ENCODE measurements at regions of chr3 and their contacts with region 1.

Region 1: GRCh38 chr3:111859974-111860859 is 1.2 kb downstream of the PHLDB2 start:
- DNase-seq: peak; percentile 27
- H3K4me3 Mint-ChIP-seq: peak overlapping the region; percentile 85
- H3K27ac Mint-ChIP-seq: no peak overlapping the region
- H3K4me1 Mint-ChIP-seq: peaks cover 27% of the 10 kb centered on the region
- H3K27me3 Mint-ChIP-seq: peaks cover 61% of the 10 kb centered on the region

Region 2: DNA sequence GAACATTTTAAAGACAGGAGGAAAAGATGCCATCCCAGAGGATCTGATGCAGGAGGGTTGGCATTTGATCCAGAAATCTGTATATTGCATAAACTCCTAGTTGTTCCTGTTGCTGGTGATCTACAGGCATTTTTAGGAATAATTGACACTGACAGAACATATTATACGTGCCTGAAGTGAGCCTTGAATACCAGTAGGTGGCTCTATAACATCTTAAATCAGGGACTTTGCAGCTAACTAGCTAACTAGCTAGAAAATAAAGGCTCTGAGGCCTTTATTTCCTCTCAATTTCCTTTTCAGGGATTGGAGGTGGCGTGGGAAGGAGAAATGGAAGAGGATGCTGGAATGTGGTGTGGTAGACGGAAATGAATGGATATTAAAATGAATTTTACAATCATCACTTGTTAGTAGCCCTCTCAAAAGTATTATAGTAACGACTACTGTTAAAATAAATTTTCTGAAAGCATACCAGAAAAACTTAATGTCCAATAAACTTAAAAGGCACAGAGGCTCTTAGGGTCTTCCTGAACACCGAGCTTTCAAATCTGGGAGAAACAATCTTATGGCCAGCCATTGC is 191.2 kb before region 1 on chr3:
- intact Hi-C with region 1: no loop called
- DNase-seq: no peak
- H3K4me3 Mint-ChIP-seq: no peak overlapping the region
- H3K27ac Mint-ChIP-seq: peak overlapping the region; percentile 63
- H3K4me1 Mint-ChIP-seq: peaks cover 85% of the 10 kb centered on the region
- H3K27me3 Mint-ChIP-seq: no peaks in the 10 kb centered on the region

Region 3: DNA sequence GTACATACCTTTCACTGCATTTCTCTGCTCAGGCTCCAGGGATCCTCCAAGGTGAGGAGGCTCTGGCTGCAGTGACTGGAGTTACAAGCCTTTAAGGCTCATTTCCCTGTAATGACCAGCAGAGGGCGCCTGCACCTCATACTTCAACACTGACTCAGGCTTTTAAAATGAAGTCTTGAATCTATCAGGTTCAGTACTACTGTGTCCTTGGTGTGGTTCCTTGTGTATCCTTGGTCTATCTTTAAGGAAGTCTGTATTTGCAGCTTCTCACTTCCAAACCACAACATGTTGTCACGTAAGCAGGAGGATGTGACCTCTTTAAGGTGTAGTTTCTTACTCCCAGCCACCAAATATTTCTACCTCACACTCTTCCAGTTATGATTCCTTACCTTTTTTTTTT is 142.6 kb before region 1 on chr3:
- intact Hi-C with region 1: loop called (anchors 1 kb)
- DNase-seq: peak; percentile 44
- H3K4me3 Mint-ChIP-seq: no peak overlapping the region
- H3K27ac Mint-ChIP-seq: peak overlapping the region; percentile 70
- H3K4me1 Mint-ChIP-seq: peaks cover 8% of the 10 kb centered on the region
- H3K27me3 Mint-ChIP-seq: no peaks in the 10 kb centered on the region

Region 4: GRCh38 chr3:111737706-111738086 is 122.5 kb before region 1 on chr3:
- intact Hi-C with region 1: loop called (anchors 5 kb)
- DNase-seq: no peak
- H3K4me3 Mint-ChIP-seq: no peak overlapping the region
- H3K27ac Mint-ChIP-seq: no peak overlapping the region
- H3K4me1 Mint-ChIP-seq: peaks cover 27% of the 10 kb centered on the region
- H3K27me3 Mint-ChIP-seq: no peaks in the 10 kb centered on the region

Region 5: GRCh38 chr3:111895079-111895478 is 34.9 kb after region 1 on chr3:
- intact Hi-C with region 1: no loop called
- DNase-seq: no peak
- H3K4me3 Mint-ChIP-seq: no peak overlapping the region
- H3K27ac Mint-ChIP-seq: no peak overlapping the region
- H3K4me1 Mint-ChIP-seq: no peaks in the 10 kb centered on the region
- H3K27me3 Mint-ChIP-seq: no peaks in the 10 kb centered on the region

Region 6: GRCh38 chr3:112437146-112438022 is 577.2 kb after region 1 on chr3:
- intact Hi-C with region 1: no loop called
- DNase-seq: peak; percentile 30
- H3K4me3 Mint-ChIP-seq: no peak overlapping the region
- H3K27ac Mint-ChIP-seq: peak overlapping the region; percentile 75
- H3K4me1 Mint-ChIP-seq: peaks cover 67% of the 10 kb centered on the region
- H3K27me3 Mint-ChIP-seq: no peaks in the 10 kb centered on the region

Region 7: DNA sequence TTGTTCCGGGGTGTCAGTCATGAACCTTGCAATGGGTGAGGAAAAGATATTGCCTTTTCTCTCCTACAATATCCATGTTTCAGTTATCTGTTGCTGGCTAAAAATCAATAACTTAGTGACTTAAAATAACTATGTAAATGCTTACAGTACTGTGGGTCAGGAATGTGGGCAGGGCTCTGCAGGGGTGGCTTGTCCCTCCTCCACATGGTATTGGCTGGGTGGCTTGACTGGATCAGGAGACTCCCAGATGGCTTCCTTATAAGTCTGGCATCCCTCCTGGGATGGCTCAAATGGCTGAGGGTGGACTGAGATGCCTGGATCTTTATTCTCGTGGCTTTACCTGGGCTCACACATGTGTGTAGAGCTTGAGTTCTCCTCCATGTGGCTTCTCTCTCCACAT is 1178.1 kb after region 1 on chr3:
- intact Hi-C with region 1: no loop called
- DNase-seq: no peak
- H3K4me3 Mint-ChIP-seq: no peak overlapping the region
- H3K27ac Mint-ChIP-seq: no peak overlapping the region
- H3K4me1 Mint-ChIP-seq: no peaks in the 10 kb centered on the region
- H3K27me3 Mint-ChIP-seq: no peaks in the 10 kb centered on the region

Measured in activated T-helper 1 cell treated with anti-CD3 and anti-CD28 coated beads, Interleukin-12 subunit alpha, Interleukin-12 subunit beta, Interleukin-2, Interleukin-4 antibody, amounts not matched to agents 30 ng/mL and 10 ng/mL and 1 ng/mL, durations not matched to agents 14 hours and 24 hours and 36 hours (primary cell).